ENCODE measurements at regions of chr4 and their contacts with region 1.

Region 1: GRCh38 chr4:7192252-7193029 is at the start of gene SORCS2:
- DNase-seq: peak; percentile 54
- H3K4me3 ChIP-seq: peak within 1 kb of the TSS; percentile 26 to 28
- H3K27ac ChIP-seq: no peak within 1 kb of the TSS
- H3K4me1 ChIP-seq: peaks cover 3% of the 10 kb centered on the region
- H3K27me3 ChIP-seq: peaks cover 14% of the 10 kb centered on the region
- CTCF ChIP-seq: peak; percentile 73 to 95 (median 77)
- POLR2A ChIP-seq: no peak
- total RNA-seq, gene SORCS2: 1.0 to 4.4 TPM

Region 2: GRCh38 chr4:6974138-6974848 is 218.1 kb before region 1 on chr4:
- intact Hi-C with region 1: no loop called
- DNase-seq: peak; percentile 74
- H3K4me3 ChIP-seq: no peak overlapping the region
- H3K27ac ChIP-seq: no peak overlapping the region
- H3K4me1 ChIP-seq: no peaks in the 10 kb centered on the region
- H3K27me3 ChIP-seq: no peaks in the 10 kb centered on the region
- CTCF ChIP-seq: peak; percentile 91 to 96 (median 94)
- POLR2A ChIP-seq: no peak

Region 3: DNA sequence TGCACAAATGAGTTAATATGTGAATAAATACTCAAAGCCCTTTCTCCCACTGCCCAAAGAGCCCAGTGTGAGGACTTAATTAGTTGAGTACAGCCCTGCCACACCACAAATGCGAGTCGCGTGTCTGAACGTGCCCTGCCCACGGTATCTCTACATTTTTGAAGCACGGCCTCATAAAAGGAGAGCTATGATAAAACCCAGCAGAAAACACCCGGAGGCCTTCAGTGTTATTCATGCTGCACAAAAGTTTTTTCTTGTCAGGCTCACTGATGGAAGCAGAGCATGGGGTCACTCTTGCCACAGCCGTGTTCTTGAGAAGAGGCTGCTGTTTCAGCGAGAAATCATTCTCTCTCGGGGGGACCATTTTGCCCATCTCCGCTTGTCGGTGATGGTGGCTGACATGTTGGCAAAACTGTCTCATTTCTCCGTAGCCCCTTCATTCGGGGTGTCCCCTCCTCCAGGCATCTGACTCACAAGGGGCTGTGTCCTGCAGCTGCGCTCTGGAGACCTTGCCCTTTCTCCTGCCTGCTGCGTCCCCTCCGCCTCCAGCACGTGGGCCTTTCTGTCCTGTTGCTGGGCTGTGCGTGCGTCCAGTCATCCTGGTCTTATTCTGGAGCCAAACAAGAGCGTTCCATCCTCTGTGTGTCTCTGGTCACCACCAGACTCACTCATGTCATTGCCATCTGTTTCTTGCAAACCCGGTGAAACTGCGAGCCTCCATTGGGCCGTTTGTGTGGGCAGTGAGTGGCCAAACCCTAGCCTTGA is 88.7 kb after region 1 on chr4:
- intact Hi-C with region 1: no loop called
- DNase-seq: no peak
- H3K4me3 ChIP-seq: no peak overlapping the region
- H3K27ac ChIP-seq: no peak overlapping the region
- H3K4me1 ChIP-seq: no peaks in the 10 kb centered on the region
- H3K27me3 ChIP-seq: no peaks in the 10 kb centered on the region
- CTCF ChIP-seq: no peak
- POLR2A ChIP-seq: no peak

Region 4: DNA sequence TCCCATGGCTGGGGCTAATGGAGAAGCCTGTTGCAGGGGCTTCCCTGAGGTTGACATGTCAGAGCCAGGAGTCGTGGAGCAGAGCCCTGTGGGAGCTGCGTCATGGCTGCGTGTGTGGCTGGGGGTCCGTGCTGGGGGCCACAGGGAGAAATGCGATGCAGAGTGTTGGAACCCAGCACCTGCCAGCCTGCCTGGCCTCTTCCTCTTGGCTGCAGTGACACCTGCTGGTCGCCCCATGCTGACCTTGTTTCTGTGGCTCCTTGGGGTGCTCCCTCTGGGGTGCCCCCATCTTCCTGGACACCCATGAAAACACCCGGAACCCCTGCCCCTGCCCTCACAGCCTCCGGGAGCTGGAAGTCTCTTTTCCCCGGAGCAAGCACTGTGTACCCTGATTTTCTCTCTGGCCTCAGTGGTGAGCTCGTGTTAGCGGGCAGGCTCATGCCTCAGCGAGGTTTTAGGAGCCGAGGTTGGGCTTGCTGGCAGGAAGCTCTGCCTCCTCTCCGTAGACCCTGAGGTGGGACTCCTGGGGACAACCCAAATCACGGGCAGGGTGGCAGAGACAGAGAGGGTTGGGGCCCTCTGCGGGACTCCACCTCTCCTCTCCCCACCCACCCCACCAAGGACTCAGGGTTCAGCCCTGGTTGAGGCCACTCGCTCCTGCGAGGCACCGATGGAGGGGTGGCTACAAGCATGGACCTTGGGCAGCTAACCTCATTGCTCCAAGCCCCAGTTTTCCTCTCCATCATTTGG is 103.6 kb after region 1 on chr4:
- intact Hi-C with region 1: loop called (anchors 1 kb)
- DNase-seq: no peak
- H3K4me3 ChIP-seq: no peak overlapping the region
- H3K27ac ChIP-seq: no peak overlapping the region
- H3K4me1 ChIP-seq: no peaks in the 10 kb centered on the region
- H3K27me3 ChIP-seq: no peaks in the 10 kb centered on the region
- CTCF ChIP-seq: peak; percentile 46 to 74 (median 52)
- POLR2A ChIP-seq: no peak

Region 5: GRCh38 chr4:7335344-7336069 is 143.1 kb after region 1 on chr4:
- intact Hi-C with region 1: loop called (anchors 2 kb)
- DNase-seq: peak; percentile 12
- H3K4me3 ChIP-seq: no peak overlapping the region
- H3K27ac ChIP-seq: peak overlapping the region in 1 of 2 donors; percentile 14
- H3K4me1 ChIP-seq: no peaks in the 10 kb centered on the region
- H3K27me3 ChIP-seq: no peaks in the 10 kb centered on the region
- CTCF ChIP-seq: peak in 3 of 4 experiments; percentile 42 to 64 (median 48)
- POLR2A ChIP-seq: no peak

Region 6: DNA sequence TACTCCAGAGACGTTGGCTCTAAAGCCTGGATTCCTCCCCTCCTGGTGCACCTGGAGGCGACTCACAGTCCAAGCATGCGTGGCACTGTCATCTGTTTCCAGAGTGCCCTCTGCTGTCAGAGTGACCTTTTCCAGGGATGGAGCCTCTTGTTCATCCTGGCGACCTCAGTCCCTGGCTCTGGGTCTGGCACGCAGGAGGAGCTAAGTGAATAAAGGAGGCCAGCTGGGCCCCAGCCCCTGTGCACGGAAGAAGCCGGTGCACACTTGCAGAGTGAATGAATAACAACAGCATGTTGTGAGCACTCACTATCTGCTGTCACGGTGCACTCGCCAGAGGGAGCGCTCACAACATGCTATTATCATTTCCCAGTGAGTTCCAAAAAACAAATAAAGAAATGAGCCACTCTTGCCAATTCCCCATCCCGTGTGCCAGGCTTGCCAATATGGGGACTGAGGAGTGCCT is 270.1 kb after region 1 on chr4:
- intact Hi-C with region 1: loop called (anchors 10 kb)
- DNase-seq: peak; percentile 36
- H3K4me3 ChIP-seq: no peak overlapping the region
- H3K27ac ChIP-seq: no peak overlapping the region
- H3K4me1 ChIP-seq: no peaks in the 10 kb centered on the region
- H3K27me3 ChIP-seq: peaks cover 2% of the 10 kb centered on the region
- CTCF ChIP-seq: peak; percentile 22 to 70 (median 58)
- POLR2A ChIP-seq: no peak

Region 7: GRCh38 chr4:7719354-7720174 is 527.1 kb after region 1 on chr4:
- intact Hi-C with region 1: loop called (anchors 5 kb)
- DNase-seq: peak; percentile 35
- H3K4me3 ChIP-seq: no peak overlapping the region
- H3K27ac ChIP-seq: no peak overlapping the region
- H3K4me1 ChIP-seq: no peaks in the 10 kb centered on the region
- H3K27me3 ChIP-seq: no peaks in the 10 kb centered on the region
- CTCF ChIP-seq: peak; percentile 73 to 86 (median 74)
- POLR2A ChIP-seq: no peak

Region 8: DNA sequence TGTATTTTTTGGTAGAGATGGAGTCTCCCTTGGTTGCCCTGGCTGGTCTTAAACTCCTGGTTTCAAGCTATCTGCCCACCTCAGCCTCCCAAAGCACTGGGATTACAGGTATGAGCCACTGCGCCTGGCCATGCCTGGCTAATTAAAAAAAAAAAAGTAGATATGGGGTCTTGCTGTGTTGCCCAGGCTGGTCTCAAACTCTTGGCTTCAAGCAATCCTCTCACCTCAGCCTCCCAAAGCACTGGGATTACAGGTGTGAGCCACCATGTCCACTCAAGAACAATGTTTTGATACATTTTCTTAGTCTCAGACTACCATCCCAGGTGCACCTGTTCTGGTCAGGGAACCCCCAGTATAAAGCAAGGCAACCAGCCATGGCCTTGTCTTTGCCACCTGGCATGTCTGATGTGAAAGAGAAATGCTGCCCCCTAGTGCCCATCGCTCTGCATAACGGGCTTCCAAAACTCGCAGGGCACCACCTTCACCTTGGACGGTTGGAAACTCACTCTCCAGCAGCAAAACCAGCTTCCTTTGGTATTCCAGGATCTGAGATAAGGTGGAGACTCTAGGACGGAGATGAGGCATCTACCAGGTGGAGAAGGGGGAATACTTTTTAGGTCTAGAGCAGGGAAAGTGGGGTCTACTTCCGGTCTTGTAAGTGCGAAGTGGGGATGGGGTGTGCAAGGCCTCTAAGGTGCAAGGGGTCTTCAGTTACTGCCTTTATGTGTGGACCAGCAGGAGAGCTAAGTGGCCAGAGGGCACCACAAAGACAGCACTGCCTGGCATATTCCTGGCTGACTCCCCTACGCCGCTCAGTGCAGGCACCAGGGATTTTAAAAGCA is 794.9 kb after region 1 on chr4:
- intact Hi-C with region 1: loop called (anchors 10 kb)
- DNase-seq: peak; percentile 68
- H3K4me3 ChIP-seq: no peak overlapping the region
- H3K27ac ChIP-seq: no peak overlapping the region
- H3K4me1 ChIP-seq: no peaks in the 10 kb centered on the region
- H3K27me3 ChIP-seq: no peaks in the 10 kb centered on the region
- CTCF ChIP-seq: peak; percentile 79 to 90 (median 83)
- POLR2A ChIP-seq: no peak

Measured in prostate gland (tissue), 2 donors.